ENCODE measurements at regions of chr6 and their contacts with region 1.

Region 1: DNA sequence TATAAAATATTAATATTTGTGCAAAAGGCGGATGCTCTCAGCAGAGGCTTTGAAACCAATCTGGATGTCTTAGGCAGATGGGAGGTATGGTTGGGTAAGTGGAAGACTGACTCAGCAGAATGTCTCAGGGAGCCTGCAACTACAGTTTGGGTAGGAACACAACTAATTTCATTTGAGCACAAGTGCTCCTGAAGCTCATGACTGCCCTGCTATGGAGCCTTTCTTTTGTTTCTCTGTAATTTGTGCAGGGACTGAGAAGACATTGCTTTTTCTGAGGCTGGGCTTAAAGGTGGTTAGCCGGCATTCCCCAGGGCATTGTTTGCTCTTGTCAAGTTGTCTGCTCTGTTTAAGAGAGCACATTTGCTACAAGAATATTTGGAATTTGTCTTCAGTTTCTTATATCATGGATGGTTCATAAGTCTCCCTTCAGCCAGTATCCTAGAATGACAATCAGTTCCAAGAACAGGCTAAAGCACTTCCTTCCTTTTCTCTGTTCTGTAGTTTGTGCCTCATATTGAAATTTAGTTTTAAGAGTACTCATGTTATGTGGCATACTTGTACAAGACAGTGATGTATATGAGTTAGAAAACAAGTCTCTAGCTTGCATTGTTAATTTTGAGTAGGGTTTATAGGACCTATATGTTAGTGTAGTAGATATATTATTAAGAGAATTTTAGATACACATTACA is 208.3 kb downstream of the ZFAND3 start:
- DNase-seq: no peak
- H3K4me3 ChIP-seq: no peak overlapping the region
- H3K27ac ChIP-seq: no peak overlapping the region
- H3K27me3 ChIP-seq: no peaks in the 10 kb centered on the region
- CTCF ChIP-seq: no peak

Region 2: DNA sequence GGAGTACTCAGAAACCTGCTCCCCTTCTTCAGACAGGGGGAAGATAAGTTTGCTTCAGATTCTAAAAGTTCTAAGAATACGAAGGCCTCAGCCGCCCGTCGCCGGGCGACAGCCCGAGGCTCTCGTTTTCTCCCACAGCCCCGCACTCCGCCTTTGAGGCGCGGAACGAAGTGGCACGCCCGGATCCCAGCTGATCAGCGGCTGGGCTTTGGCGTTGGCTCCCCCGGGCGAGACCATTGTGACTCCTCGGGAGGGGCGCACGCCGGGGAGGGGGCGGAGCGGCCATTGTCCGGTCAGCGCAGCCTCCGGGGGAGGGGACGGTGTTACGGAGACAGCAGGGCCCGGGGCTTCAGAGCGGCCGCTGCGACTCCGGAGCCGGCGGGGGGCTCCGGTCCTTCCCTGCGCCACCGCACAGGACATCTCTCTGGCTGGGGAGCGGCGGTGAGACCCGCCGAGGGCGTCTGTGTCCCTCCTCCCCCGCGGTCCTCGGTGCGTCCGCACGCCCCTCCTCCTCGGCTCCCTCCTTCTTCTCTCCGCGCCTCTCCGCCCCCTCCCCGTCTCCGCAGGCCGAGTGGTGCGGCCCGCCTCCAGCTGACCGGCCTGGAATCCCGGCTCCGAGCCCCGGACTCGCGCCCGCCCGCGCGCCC is 208.5 kb before region 1 on chr6 and contains the start of gene ZFAND3:
- intact Hi-C with region 1: loop called in 1 of 2 experiments (anchors 10 kb)
- DNase-seq: peak; percentile 90 to 98 (median 94)
- H3K4me3 ChIP-seq: peak within 1 kb of the TSS; percentile 66 to 96 (median 86)
- H3K27ac ChIP-seq: peak within 1 kb of the TSS; percentile 92 to 100 (median 99)
- H3K27me3 ChIP-seq: no peaks in the 10 kb centered on the region
- CTCF ChIP-seq: peak in 11 of 56 donors; percentile 4 to 30 (median 9)
- total RNA-seq, gene ZFAND3: 48.5 to 106 (median 70.2) TPM

Region 3: DNA sequence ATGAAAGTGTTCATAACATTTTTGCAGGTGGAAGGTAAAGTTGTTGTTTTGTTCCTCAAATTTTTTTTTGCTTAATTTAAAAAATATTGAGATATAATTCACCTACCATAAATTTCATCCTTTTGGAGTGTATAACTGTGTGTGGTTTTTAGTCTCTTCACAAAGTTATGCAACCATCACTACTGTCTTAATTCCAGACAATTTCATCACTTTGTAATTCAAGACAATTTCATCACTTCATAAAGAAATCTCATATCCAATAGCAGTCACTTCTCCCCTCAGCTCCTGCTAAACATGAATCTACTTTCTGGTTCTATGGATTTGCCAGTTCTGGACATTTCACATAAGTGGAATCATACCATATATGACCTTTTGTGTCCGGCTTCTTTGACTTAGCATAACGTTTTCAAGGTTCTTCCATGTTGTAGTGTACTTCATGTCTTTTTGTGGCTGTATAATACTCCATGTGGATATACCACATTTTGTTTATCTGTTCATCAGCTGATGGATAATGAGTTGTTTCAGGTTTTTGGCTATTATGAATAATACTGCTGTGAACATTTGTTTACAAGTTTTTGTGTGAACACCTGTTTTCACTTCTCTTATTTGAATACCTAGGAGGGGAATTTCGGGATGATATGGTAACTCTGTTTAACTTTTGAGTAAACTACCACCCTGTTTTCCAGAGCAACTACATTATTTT is 189.5 kb before region 1 on chr6:
- intact Hi-C with region 1: no loop called
- DNase-seq: no peak
- H3K4me3 ChIP-seq: no peak overlapping the region
- H3K27ac ChIP-seq: no peak overlapping the region
- H3K27me3 ChIP-seq: no peaks in the 10 kb centered on the region
- CTCF ChIP-seq: no peak

Measured in dorsolateral prefrontal cortex (tissue), 120 donors.